Common myeloid progenitor, CD34-positive (primary cell): ENCODE measurements at regions of chr15 and their contacts with region 1.

Region 1: GRCh38 chr15:57527382-57528091 is 64.2 kb upstream of the MYZAP start:
- DNase-seq: peak; percentile 75 to 89 (median 88)
- H3K4me3 ChIP-seq: no peak overlapping the region
- H3K27ac ChIP-seq: no peak overlapping the region
- H3K4me1 ChIP-seq: no peaks in the 10 kb centered on the region
- H3K27me3 ChIP-seq: no peaks in the 10 kb centered on the region

Region 2: DNA sequence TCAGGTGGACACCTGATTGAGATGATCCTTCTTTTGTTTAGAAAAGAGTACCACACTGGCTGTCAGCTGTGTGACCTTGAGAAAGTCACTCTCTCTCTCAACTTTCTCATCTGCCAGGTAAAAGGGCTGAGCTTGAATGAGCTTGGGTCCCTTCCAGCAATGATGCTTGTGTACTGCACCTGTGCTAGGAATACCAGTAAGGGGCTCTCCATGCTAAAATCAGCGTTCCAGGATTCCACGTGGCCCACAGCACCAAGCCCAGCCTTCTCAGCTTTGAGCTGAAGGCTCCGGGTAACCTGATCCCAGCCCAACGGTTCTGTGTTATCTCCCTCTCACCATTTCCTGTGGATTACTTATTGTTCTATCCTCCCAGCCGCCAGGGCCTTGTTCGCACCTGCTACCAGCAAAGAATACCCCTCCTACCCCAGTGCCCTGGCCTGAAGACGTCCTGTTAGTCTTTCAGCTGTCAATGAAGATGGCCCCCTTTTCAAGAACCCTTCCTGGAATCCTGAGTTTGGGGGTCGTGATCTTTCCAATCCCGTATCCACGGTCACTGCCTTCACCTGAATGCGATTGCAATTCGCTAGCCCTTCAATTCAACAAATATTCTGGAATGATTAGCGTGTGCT is 205.4 kb before region 1 on chr15:
- CTCF ChIA-PET with region 1: interaction called, 10 read pairs
- POLR2A ChIA-PET with region 1: no interaction called
- DNase-seq: peak; percentile 52 to 89 (median 78)
- H3K4me3 ChIP-seq: no peak overlapping the region
- H3K27ac ChIP-seq: peak overlapping the region in 1 of 2 experiments; percentile 67
- H3K4me1 ChIP-seq: peaks cover 0 to 36% (median 21%) of the 10 kb centered on the region in 4 experiments
- H3K27me3 ChIP-seq: no peaks in the 10 kb centered on the region

Region 3: GRCh38 chr15:57340682-57341259 is 186.8 kb before region 1 on chr15:
- CTCF ChIA-PET with region 1: interaction called, 151 read pairs
- POLR2A ChIA-PET with region 1: no interaction called
- DNase-seq: peak; percentile 58 to 80 (median 64)
- H3K4me3 ChIP-seq: no peak overlapping the region
- H3K27ac ChIP-seq: no peak overlapping the region
- H3K4me1 ChIP-seq: peaks cover 0 to 12% (median 9%) of the 10 kb centered on the region in 4 experiments
- H3K27me3 ChIP-seq: no peaks in the 10 kb centered on the region

Region 4: DNA sequence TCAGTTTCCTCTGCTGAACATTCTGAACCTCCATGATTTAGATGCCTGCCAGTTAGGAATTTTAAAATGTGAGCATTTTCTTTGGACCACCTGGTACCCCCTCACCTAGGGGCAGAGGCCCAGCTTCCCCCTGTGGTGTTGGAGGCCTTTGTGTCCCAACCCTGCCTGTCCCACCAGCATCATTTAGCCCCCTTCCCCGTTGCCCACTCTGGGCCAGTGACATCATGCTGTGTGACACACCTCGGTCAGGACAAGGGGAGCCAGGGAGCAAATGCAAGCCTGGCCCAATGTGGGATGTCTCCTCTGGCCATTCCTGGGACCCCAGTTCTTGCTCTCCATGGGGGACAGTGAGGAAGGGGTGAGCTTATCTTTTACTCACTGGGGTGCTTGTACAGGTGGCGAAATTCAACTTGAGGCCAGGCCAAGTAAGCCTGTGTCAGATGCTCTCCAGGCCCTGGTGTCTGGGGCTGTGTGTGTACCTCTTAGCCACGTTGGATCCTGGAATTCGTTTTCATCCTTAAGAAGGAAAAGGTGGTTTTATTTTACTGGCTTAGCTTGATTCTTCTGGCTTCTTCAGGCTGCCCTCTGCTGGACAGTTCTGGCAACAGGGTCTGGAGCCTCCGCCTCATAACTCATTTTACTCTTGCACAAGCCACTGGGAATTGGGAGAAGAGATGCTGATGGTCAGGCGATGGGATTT is 14.4 kb after region 1 on chr15:
- CTCF ChIA-PET with region 1: interaction called, 35 read pairs
- POLR2A ChIA-PET with region 1: no interaction called
- DNase-seq: peak; percentile 40 to 62 (median 49)
- H3K4me3 ChIP-seq: no peak overlapping the region
- H3K27ac ChIP-seq: no peak overlapping the region
- H3K4me1 ChIP-seq: no peaks in the 10 kb centered on the region
- H3K27me3 ChIP-seq: peaks cover 0 to 7% (median 0%) of the 10 kb centered on the region in 5 experiments